ENCODE measurements at regions of chr20 and their contacts with region 1.

Region 1: DNA sequence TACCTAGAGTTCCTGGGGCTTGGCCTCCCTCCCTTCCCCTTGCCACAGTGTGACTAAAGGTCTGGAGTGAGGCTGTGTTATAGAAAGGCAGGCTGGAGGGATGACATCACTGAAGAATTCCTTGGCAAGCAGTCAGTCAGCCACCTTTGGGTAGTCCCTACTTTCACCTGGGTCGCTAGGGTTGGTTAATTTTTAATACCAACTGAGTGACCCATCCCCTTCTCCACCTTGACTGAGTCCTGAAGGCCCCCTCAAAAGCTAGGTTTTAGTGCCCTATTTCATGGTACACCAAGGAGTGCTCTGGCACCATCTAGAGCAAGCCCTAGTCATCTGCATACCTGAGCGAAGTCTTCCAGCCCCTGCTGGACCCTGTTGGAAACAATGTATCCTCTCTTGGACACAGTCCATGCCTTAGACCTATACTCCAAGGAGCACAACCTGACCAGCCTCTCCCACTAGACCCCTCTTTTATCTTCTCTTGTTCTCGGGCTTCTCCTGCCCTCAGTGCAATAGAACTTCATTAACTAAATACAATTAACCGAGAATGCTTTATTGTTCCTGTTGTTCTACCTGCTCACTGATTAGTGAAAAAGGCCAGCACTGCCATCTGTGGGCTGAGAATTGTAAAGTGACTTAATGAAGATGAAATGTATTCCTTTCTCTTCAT is 44.6 kb downstream of the RIN2 start:
- DNase-seq: no peak
- ATAC-seq: peak; percentile 54
- H3K4me3 Mint-ChIP-seq: no peak overlapping the region
- H3K27ac Mint-ChIP-seq: no peak overlapping the region
- H3K4me1 Mint-ChIP-seq: peaks cover 17% of the 10 kb centered on the region
- H3K27me3 Mint-ChIP-seq: no peaks in the 10 kb centered on the region
- CTCF ChIP-seq: no peak

Region 2: DNA sequence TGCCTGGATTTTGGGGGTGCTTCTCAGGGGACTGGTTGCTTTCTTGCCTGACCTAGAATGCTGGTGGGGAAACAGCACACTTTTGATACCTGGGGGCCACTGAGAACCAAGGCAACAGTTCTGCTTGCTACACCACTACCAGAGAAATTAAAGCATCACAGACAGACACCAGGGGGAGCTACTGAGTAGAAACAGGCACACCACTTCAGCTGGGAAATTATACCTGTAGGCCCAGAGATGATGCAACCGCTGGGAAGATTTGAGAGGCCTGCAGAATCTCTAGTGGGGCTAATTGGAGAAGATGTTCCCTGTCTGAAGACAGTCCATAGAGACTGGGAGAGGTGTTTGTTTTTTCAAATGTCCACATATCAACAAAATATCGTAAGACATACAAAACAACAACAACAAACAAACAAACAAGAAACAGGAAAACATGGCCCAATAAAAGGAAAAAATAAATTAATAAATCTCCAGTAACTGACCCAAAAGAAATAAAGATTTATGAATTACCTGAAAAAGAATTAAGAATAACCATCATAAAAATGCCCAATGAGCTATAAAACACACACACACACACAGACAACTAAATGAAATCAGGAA is 174.0 kb before region 1 on chr20:
- CTCF ChIA-PET with region 1: interaction called, 3 read pairs
- POLR2A ChIA-PET with region 1: no interaction called
- intact Hi-C with region 1: loop called (anchors 1 kb)
- DNase-seq: no peak
- ATAC-seq: peak; percentile 78
- H3K4me3 Mint-ChIP-seq: no peak overlapping the region
- H3K27ac Mint-ChIP-seq: no peak overlapping the region
- H3K4me1 Mint-ChIP-seq: peaks cover 3% of the 10 kb centered on the region
- H3K27me3 Mint-ChIP-seq: peaks cover 8% of the 10 kb centered on the region
- CTCF ChIP-seq: no peak

Region 3: GRCh38 chr20:19779634-19780033 is 23.0 kb before region 1 on chr20:
- CTCF ChIA-PET with region 1: no interaction called
- POLR2A ChIA-PET with region 1: no interaction called
- intact Hi-C with region 1: no loop called
- DNase-seq: no peak
- ATAC-seq: no peak
- H3K4me3 Mint-ChIP-seq: no peak overlapping the region
- H3K27ac Mint-ChIP-seq: no peak overlapping the region
- H3K4me1 Mint-ChIP-seq: peaks cover 14% of the 10 kb centered on the region
- H3K27me3 Mint-ChIP-seq: peaks cover 6% of the 10 kb centered on the region
- CTCF ChIP-seq: no peak

Region 4: GRCh38 chr20:19858466-19859371 is 56.1 kb after region 1 on chr20:
- CTCF ChIA-PET with region 1: no interaction called
- POLR2A ChIA-PET with region 1: no interaction called
- intact Hi-C with region 1: no loop called
- DNase-seq: no peak
- ATAC-seq: no peak
- H3K4me3 Mint-ChIP-seq: no peak overlapping the region
- H3K27ac Mint-ChIP-seq: no peak overlapping the region
- H3K4me1 Mint-ChIP-seq: no peaks in the 10 kb centered on the region
- H3K27me3 Mint-ChIP-seq: peaks cover 24% of the 10 kb centered on the region
- CTCF ChIP-seq: no peak